Activated CD8-positive, alpha-beta T cell treated with anti-CD3 and anti-CD28 coated beads for 36 hours (primary cell): ENCODE measurements at regions of chr3 and their contacts with region 1.

Region 1: DNA sequence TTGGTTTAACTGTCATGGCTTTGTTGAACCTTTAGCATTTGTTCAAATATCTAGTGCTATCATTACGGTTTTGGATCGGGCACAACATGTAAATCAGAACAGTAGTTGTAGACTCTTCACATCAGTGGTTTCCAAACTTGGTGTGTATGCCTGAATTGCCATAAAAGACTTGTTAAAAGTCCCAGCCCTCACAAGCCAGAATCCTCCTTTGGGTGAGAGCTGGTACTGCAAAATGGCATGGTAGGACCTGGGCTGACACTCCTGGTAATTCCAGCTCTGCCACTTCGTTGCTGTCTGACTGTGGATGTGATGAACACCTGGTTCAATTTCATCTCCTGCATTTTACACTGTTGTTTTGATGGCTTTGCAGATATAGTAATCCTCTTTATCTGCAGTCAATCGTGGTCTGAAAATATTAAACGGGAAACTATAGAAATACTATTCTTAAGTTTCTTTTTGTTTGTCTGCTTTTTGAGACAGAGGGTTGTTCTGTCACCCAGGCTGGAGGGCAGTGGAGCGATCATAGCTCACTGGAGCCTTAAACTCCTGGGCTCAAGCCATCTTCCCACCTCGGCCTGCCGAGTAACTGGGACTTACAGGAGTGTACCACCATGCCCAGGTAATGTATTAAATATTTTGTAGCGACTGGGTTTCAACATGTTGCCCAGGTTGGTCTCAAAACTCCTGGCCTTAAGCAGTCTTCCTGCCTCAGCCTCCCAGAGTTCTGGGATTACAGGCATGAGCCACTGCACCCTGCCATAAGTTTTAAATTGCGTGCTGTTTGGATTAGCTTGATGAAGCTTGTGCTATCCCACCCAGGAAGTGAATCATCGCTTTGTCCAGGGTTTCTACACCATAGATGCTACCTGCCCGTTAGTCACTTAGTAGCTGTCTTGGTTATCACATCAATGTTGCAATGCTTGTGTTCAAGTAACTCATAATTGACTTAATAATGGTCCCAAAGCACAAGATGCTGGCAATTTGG is 61.6 kb downstream of the RAB7A start:
- DNase-seq: peak; percentile 63
- ATAC-seq: peak; percentile 74
- H3K4me3 Mint-ChIP-seq: peak overlapping the region; percentile 74
- H3K27ac Mint-ChIP-seq: peak overlapping the region; percentile 99
- H3K4me1 Mint-ChIP-seq: peaks cover 96% of the 10 kb centered on the region
- H3K27me3 Mint-ChIP-seq: no peaks in the 10 kb centered on the region
- CTCF ChIP-seq: peak; percentile 72

Region 2: GRCh38 chr3:128725932-128726690 is 61.4 kb before region 1 on chr3 and contains the start of gene RAB7A:
- CTCF ChIA-PET with region 1: interaction called, 4 read pairs
- POLR2A ChIA-PET with region 1: interaction called, 4 read pairs
- intact Hi-C with region 1: loop called (anchors 5 kb)
- DNase-seq: peak; percentile 98
- ATAC-seq: peak; percentile 90
- H3K4me3 Mint-ChIP-seq: peak within 1 kb of the TSS; percentile 100
- H3K27ac Mint-ChIP-seq: peak within 1 kb of the TSS; percentile 97
- H3K4me1 Mint-ChIP-seq: peaks cover 50% of the 10 kb centered on the region
- H3K27me3 Mint-ChIP-seq: no peaks in the 10 kb centered on the region
- CTCF ChIP-seq: no peak
- total RNA-seq, gene RAB7A: 304 to 322 TPM

Region 3: GRCh38 chr3:128760042-128760441 is 27.5 kb before region 1 on chr3:
- CTCF ChIA-PET with region 1: interaction called, 12 read pairs
- POLR2A ChIA-PET with region 1: no interaction called
- intact Hi-C with region 1: no loop called
- DNase-seq: no peak
- ATAC-seq: no peak
- H3K4me3 Mint-ChIP-seq: no peak overlapping the region
- H3K27ac Mint-ChIP-seq: peak overlapping the region; percentile 14
- H3K4me1 Mint-ChIP-seq: peaks cover 66% of the 10 kb centered on the region
- H3K27me3 Mint-ChIP-seq: no peaks in the 10 kb centered on the region
- CTCF ChIP-seq: no peak

Region 4: DNA sequence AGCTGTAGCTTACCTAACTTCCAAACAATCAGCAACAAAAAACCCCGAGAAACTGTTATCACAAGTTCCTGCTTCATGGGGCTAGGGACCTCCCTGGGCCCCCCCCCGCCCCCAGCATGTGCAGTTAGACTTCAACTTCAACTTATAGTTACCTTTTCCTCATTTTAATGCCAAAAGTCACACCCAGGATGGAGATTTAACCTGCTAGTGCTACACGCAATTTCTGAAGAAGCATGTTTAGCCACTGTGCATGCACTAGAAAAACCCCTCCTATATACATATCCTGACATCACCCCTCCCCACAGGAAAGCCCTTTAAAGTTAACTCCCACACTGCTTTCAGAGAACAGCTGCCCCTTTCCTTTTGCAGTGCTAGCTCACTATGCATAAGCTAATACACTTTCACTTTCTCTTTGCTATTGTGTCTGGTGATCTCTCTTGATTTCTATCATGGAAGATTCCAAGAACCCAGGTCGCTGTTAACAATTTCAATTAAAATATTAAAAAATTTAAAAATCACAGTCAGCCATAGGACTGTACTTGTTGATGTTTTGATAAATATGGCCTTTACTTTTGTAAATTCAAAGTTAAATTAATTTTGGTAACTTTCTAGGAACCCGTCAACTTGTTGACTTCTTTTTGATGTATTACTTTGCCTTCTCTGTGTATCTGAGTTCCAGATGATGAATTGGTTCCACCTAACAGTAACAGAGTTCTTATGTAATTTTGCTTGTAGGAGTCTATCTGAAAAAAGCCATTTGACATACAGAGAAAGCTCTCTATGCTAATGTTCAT is 16.7 kb after region 1 on chr3:
- CTCF ChIA-PET with region 1: interaction called, 36 read pairs
- POLR2A ChIA-PET with region 1: interaction called, 40 read pairs
- intact Hi-C with region 1: loop called (anchors 2 kb)
- DNase-seq: peak; percentile 84
- ATAC-seq: peak; percentile 81
- H3K4me3 Mint-ChIP-seq: peak overlapping the region; percentile 79
- H3K27ac Mint-ChIP-seq: peak overlapping the region; percentile 88
- H3K4me1 Mint-ChIP-seq: peaks cover 82% of the 10 kb centered on the region
- H3K27me3 Mint-ChIP-seq: no peaks in the 10 kb centered on the region
- CTCF ChIP-seq: no peak